ENCODE measurements at regions of chr22 and their contacts with region 1.

Region 1: GRCh38 chr22:23925020-23925606 is 30.9 kb downstream of the MIF start:
- DNase-seq: no peak
- H3K4me3 ChIP-seq: no peak overlapping the region
- H3K27ac ChIP-seq: no peak overlapping the region
- H3K4me1 ChIP-seq: peaks cover 0 to 6% (median 0%) of the 10 kb centered on the region in 4 donors
- H3K27me3 ChIP-seq: no peaks in the 10 kb centered on the region
- CTCF ChIP-seq: no peak

Region 2: DNA sequence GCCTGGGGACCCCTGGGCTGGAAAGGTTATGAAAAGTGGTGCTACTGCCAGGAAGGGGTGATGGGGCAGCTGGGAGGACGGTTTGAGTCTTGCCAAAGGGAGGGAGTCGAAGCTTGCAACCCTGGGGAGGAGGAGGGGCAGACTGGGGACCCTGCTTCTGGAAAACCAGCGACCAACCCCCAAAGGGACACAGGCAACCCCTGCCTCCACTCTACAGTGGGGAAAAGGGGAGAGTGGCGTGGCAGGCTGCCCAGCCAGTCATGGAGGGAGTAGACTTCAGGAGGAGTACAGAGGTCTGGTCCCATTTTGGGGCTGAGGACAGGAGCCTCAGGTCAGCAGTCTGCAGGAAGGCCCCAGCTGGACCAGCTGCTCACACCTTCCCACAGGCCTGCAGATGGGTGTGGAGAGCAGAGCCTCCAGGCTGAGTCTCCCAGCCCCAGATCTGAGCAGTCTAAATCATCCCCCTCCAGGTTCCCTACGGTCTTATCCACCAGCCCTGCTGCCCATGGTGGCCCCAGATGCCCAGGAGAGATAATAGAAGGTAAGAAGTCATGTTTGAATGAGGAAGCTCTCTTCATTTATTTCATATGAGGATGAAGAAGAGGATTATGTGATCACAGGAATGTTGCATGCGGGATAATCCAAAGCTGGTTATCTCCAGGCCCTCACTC is 45.8 kb after region 1 on chr22:
- intact Hi-C with region 1: loop called (anchors 5 kb)
- DNase-seq: no peak
- H3K4me3 ChIP-seq: no peak overlapping the region
- H3K27ac ChIP-seq: no peak overlapping the region
- H3K4me1 ChIP-seq: peaks cover 0 to 8% (median 0%) of the 10 kb centered on the region in 4 donors
- H3K27me3 ChIP-seq: no peaks in the 10 kb centered on the region
- CTCF ChIP-seq: no peak

Region 3: DNA sequence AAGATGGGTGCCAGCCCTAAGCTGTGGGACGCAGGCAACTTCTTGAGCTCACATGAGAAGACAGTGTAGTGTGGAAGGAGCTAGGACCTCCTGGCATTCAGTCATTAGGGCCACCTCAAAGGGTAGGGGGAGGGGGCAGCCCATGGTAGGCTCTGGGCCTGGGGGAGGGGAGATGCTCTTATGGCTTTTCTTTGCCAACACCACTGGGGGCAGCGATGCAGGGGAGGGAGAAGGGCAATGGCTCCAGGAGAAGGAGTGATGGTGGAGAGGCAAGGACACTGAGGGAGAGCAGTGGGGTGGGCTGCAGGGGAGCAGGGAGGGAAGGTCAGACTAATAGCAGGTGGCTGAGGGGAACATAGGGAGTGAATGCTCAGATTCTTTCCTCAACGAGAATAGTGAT is 192.8 kb after region 1 on chr22:
- intact Hi-C with region 1: no loop called
- DNase-seq: no peak
- H3K4me3 ChIP-seq: no peak overlapping the region
- H3K27ac ChIP-seq: no peak overlapping the region
- H3K4me1 ChIP-seq: peaks cover 0 to 29% (median 16%) of the 10 kb centered on the region in 4 donors
- H3K27me3 ChIP-seq: no peaks in the 10 kb centered on the region
- CTCF ChIP-seq: no peak

Measured in tibial artery (tissue), 4 donors.